ENCODE measurements at regions of chr3 and their contacts with region 1.

Region 1: DNA sequence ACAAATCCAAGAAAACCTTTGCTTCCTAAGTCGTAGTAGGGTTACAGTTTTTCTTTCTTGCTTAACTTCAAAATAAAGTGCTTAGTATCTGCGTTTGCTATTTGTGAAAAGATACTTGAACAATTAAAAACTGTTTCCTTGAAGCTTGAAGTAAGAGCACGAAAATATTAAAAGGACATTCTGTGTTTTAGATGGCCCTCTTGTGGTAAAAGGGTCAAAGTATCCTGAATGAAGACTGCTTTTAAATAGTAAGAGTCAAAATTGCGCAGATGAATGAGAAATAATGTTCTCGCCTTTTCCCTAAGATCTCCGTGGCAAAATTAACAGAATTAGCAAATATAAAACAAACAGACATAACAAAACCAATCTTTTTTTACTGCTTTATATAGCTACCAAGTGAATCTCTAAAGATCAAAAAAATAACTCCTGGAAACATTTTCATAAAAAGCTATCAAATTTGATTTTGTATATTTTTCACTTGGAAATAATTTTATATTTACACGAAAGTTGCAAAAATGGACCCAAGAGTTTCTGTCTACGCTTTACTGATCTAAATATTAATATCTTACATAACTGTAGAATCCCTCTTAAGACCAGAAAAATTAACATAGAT is 175.4 kb downstream of the MBNL1 start:
- DNase-seq: peak in 2 of 3 donors; percentile 21 to 22
- H3K4me3 ChIP-seq: no peak overlapping the region
- H3K4me3 Mint-ChIP-seq: no peak overlapping the region
- H3K27ac ChIP-seq: peak overlapping the region in 1 of 2 donors; percentile 62
- H3K27ac Mint-ChIP-seq: peak overlapping the region in 2 of 7 donors; percentile 9 to 32
- H3K4me1 ChIP-seq: peaks cover 0 to 5% of the 10 kb centered on the region in 2 donors
- H3K4me1 Mint-ChIP-seq: peaks cover 11% of the 10 kb centered on the region
- H3K27me3 ChIP-seq: no peaks in the 10 kb centered on the region
- H3K27me3 Mint-ChIP-seq: no peaks in the 10 kb centered on the region
- CTCF ChIP-seq: peak; percentile 62

Region 2: GRCh38 chr3:152071924-152072323 is 372.2 kb before region 1 on chr3:
- intact Hi-C with region 1: loop called in 1 of 2 experiments (anchors 10 kb)
- DNase-seq: peak; percentile 41 to 55 (median 49)
- H3K4me3 ChIP-seq: no peak overlapping the region
- H3K4me3 Mint-ChIP-seq: no peak overlapping the region
- H3K27ac ChIP-seq: no peak overlapping the region
- H3K27ac Mint-ChIP-seq: no peak overlapping the region
- H3K4me1 ChIP-seq: no peaks in the 10 kb centered on the region
- H3K4me1 Mint-ChIP-seq: no peaks in the 10 kb centered on the region
- H3K27me3 ChIP-seq: no peaks in the 10 kb centered on the region
- H3K27me3 Mint-ChIP-seq: no peaks in the 10 kb centered on the region
- CTCF ChIP-seq: peak; percentile 59

Region 3: DNA sequence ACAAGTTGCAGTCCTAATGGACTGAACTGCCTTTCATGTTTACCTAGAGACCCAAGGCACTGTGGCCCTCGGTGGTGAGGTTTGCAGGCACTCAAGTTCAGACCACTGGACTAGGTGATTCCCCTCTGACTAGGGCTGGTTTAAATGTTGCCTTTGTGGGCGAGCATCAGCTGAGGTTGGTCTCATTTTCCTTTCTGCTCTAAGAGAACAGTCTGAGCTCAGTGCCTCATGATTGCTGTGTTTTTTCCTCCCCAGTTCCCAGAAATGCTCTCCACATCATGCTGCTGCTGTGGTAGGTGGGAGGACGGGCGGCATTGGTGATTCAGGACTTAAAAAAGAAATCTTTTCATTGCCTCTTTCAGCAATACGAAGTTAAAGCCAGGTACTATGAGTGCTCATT is 61.8 kb after region 1 on chr3:
- intact Hi-C with region 1: no loop called
- DNase-seq: no peak
- H3K4me3 ChIP-seq: no peak overlapping the region
- H3K4me3 Mint-ChIP-seq: no peak overlapping the region
- H3K27ac ChIP-seq: no peak overlapping the region
- H3K27ac Mint-ChIP-seq: no peak overlapping the region
- H3K4me1 ChIP-seq: no peaks in the 10 kb centered on the region
- H3K4me1 Mint-ChIP-seq: no peaks in the 10 kb centered on the region
- H3K27me3 ChIP-seq: no peaks in the 10 kb centered on the region
- H3K27me3 Mint-ChIP-seq: peaks cover 0 to 4% (median 4%) of the 10 kb centered on the region in 3 donors
- CTCF ChIP-seq: no peak

Measured in CD14-positive monocyte (primary cell).